ENCODE measurements at regions of chr9 and their contacts with region 1.

Region 1: DNA sequence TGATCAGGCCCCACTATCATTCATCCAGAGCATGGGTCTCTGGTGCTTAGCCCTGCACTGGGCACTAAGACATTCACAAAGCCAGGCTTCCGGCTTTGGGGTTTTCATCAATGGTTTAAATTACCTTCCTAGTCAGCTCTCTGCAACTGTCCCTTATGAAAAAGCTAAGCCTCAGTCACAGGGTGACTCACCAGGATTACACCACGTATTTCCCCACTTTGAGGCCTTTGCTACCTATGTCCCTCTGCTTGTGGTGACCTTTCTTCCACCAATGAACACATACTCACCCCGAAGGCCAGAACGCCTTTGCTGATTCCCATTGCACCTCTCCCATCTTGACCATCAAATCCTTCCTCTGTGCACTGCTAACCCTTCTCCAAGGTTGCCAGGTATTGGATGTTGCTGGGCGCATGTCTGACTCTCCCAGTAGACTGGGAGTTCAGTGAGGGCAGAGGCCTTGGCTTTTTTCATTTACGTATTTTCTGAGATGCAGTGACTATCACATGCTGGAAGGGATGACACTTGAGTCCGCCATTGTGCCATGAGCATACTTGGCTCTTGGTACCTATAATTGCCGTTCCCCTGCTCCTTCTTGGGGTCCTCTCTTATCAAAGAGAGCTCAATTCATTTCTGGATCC is 58.7 kb upstream of the TNFSF8 start:
- DNase-seq: peak; percentile 68
- ATAC-seq: peak; percentile 67
- H3K4me3 Mint-ChIP-seq: peak overlapping the region; percentile 8
- H3K27ac Mint-ChIP-seq: peak overlapping the region; percentile 93
- H3K4me1 Mint-ChIP-seq: peaks cover 51% of the 10 kb centered on the region
- H3K27me3 Mint-ChIP-seq: no peaks in the 10 kb centered on the region
- CTCF ChIP-seq: no peak

Region 2: GRCh38 chr9:114696814-114697544 is 292.1 kb before region 1 on chr9:
- CTCF ChIA-PET with region 1: interaction called, 6 read pairs
- POLR2A ChIA-PET with region 1: interaction called, 10 read pairs
- intact Hi-C with region 1: no loop called
- DNase-seq: peak; percentile 94
- ATAC-seq: peak; percentile 67
- H3K4me3 Mint-ChIP-seq: peak overlapping the region; percentile 63
- H3K27ac Mint-ChIP-seq: peak overlapping the region; percentile 95
- H3K4me1 Mint-ChIP-seq: peaks cover 78% of the 10 kb centered on the region
- H3K27me3 Mint-ChIP-seq: no peaks in the 10 kb centered on the region
- CTCF ChIP-seq: no peak

Region 3: GRCh38 chr9:114919611-114920010 is 69.5 kb before region 1 on chr9:
- CTCF ChIA-PET with region 1: interaction called, 6 read pairs
- POLR2A ChIA-PET with region 1: interaction called, 11 read pairs
- intact Hi-C with region 1: no loop called
- DNase-seq: peak; percentile 43
- ATAC-seq: peak; percentile 77
- H3K4me3 Mint-ChIP-seq: peak overlapping the region; percentile 11
- H3K27ac Mint-ChIP-seq: peak overlapping the region; percentile 83
- H3K4me1 Mint-ChIP-seq: peaks cover 85% of the 10 kb centered on the region
- H3K27me3 Mint-ChIP-seq: no peaks in the 10 kb centered on the region
- CTCF ChIP-seq: no peak

Region 4: DNA sequence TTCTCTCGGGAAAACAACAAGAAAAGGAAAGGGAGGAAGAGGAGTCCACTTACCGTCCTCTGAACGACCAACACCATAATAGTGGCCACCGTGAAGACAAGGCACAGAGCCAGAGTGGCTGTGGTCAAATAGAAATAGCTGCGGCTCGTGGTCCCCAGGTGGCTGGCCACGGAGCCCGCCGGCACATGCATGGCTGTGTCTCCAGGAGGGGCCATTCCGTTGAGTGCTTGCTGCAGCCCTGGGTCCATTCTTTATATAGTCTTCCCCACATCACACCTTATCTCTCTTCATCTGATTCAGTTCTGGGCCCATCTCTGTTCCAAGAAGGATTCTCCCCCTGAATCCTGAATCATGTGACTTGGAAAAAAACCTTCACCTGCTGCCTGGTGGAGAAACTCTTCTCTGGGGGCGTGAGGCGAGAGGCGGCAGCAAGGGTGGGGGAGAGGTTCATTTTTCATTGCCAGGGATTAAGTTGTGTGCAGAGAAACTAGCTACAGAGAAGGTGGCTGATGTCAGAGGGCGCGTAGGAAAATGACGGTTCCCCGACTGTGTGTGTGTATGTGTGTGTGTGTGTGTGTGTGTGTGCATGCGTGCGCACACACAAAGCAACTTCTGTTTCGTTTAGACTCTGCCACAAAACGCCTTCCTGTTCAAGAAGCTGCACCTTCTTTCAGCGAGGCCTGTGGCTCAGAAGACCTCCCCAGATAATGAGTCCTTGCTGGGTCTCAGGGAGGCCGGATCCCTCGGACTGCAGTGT is 58.8 kb before region 1 on chr9 and contains the start of gene TNFSF8:
- CTCF ChIA-PET with region 1: interaction called, 8 read pairs
- POLR2A ChIA-PET with region 1: interaction called, 16 read pairs
- intact Hi-C with region 1: no loop called
- DNase-seq: peak; percentile 91
- ATAC-seq: peak; percentile 87
- H3K4me3 Mint-ChIP-seq: peak within 1 kb of the TSS; percentile 89
- H3K27ac Mint-ChIP-seq: peak within 1 kb of the TSS; percentile 98
- H3K4me1 Mint-ChIP-seq: peaks cover 47% of the 10 kb centered on the region
- H3K27me3 Mint-ChIP-seq: no peaks in the 10 kb centered on the region
- CTCF ChIP-seq: no peak
- total RNA-seq, gene TNFSF8: 21.7 to 23.9 TPM

Region 5: DNA sequence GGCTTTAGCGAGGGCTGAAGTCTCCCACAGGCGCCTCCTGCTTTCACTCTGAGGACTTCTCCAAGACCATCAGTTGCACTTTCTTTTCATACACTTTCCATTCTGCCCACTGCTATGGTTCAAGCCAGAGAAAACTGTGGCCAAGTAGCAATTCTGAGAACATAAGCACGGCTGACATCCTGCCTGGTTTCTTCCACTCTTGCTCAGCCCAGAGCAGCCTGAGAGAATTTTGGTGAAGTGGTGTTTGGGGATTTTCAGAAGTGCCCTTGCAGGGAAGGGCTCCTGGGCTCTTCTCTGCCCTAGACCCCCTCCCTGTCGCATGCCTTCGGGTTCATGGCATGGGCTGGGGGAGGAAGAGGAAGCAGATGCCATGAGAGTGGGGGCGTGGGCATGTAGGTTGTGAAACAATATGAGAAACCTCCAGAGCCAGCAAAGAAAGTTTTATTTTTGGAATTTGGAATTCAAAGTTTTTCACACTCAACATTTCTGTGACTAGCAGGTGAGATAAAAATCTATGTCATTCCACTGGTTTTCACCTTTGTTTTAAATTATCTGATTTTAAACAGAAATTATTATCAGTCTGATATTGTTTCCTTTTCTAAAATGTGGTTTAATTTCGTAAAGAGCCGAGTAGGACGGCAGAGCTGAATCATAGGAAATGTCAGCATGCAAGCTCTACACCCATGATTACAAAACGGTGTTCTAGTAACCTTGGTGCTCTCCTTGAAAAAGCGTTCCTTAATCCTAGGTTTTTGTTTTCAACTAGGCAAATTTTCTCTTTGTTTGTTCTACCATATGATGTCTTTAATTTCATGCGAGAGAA is 30.8 kb before region 1 on chr9:
- CTCF ChIA-PET with region 1: interaction called, 4 read pairs
- POLR2A ChIA-PET with region 1: interaction called, 3 read pairs
- intact Hi-C with region 1: loop called (anchors 5 kb)
- DNase-seq: peak; percentile 75
- ATAC-seq: peak; percentile 83
- H3K4me3 Mint-ChIP-seq: peak overlapping the region; percentile 70
- H3K27ac Mint-ChIP-seq: peak overlapping the region; percentile 99
- H3K4me1 Mint-ChIP-seq: peaks cover 57% of the 10 kb centered on the region
- H3K27me3 Mint-ChIP-seq: no peaks in the 10 kb centered on the region
- CTCF ChIP-seq: no peak

Region 6: GRCh38 chr9:114968671-114969070 is 20.4 kb before region 1 on chr9:
- CTCF ChIA-PET with region 1: no interaction called
- POLR2A ChIA-PET with region 1: interaction called, 5 read pairs
- intact Hi-C with region 1: loop called (anchors 2 kb)
- DNase-seq: peak; percentile 26
- ATAC-seq: peak; percentile 79
- H3K4me3 Mint-ChIP-seq: no peak overlapping the region
- H3K27ac Mint-ChIP-seq: peak overlapping the region; percentile 51
- H3K4me1 Mint-ChIP-seq: peaks cover 23% of the 10 kb centered on the region
- H3K27me3 Mint-ChIP-seq: no peaks in the 10 kb centered on the region
- CTCF ChIP-seq: no peak

Region 7: DNA sequence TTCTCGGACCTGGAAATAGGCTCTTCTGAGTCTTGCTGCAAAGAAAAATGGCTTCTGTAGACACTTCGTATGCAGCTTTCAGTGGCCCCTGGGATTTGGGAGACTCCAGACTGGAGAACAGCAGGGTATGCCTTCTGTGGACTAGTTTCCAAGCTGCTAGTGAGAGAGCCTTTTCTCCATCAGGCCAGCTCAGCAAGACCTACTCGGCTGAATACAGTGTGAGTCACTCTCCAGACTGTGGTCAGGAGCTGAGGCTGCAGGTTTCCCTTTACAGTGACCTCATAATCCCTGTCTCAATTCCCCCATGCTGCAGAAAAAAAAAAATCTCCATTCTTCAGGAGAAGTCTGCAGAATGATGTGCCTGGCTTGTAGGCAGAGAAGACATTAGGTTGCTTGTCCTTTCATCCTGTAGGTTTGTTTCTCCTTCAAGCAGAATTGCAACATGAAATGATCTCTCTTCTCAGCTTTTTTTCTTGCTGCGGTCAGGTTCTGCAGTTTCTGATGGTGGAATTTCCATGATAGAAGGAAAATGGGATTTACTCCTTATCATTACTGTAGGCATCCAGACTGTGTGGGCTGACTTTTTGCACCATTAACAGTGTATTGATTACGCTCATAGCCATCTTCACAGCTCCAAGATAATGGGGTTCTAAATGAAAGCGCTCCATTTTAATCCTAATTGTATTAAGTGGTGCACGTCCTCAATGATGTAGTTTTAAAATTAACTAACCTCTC is 19.6 kb after region 1 on chr9:
- CTCF ChIA-PET with region 1: no interaction called
- POLR2A ChIA-PET with region 1: interaction called, 15 read pairs
- intact Hi-C with region 1: no loop called
- DNase-seq: peak; percentile 38
- ATAC-seq: peak; percentile 48
- H3K4me3 Mint-ChIP-seq: no peak overlapping the region
- H3K27ac Mint-ChIP-seq: no peak overlapping the region
- H3K4me1 Mint-ChIP-seq: peaks cover 63% of the 10 kb centered on the region
- H3K27me3 Mint-ChIP-seq: no peaks in the 10 kb centered on the region
- CTCF ChIP-seq: no peak

Measured in activated CD8-positive, alpha-beta T cell treated with anti-CD3 and anti-CD28 coated beads for 36 hours (primary cell).